Activated T-helper 1 cell treated with anti-CD3 and anti-CD28 coated beads, Interleukin-12 subunit alpha, Interleukin-12 subunit beta, Interleukin-2, Interleukin-4 antibody, amounts not matched to agents 30 ng/mL and 10 ng/mL and 1 ng/mL, durations not matched to agents 14 hours and 24 hours and 36 hours (primary cell): ENCODE measurements at regions of chr5 and their contacts with region 1.

Region 1: GRCh38 chr5:142151436-142152383 is 43.1 kb downstream of the NDFIP1 start:
- DNase-seq: peak; percentile 29
- H3K4me3 Mint-ChIP-seq: no peak overlapping the region
- H3K27ac Mint-ChIP-seq: no peak overlapping the region
- H3K4me1 Mint-ChIP-seq: peaks cover 14% of the 10 kb centered on the region
- H3K27me3 Mint-ChIP-seq: no peaks in the 10 kb centered on the region

Region 2: GRCh38 chr5:142296914-142297417 is 145.3 kb after region 1 on chr5:
- intact Hi-C with region 1: no loop called
- DNase-seq: no peak
- H3K4me3 Mint-ChIP-seq: no peak overlapping the region
- H3K27ac Mint-ChIP-seq: no peak overlapping the region
- H3K4me1 Mint-ChIP-seq: peaks cover 7% of the 10 kb centered on the region
- H3K27me3 Mint-ChIP-seq: peaks cover 4% of the 10 kb centered on the region

Region 3: GRCh38 chr5:142324871-142325724 is 173.4 kb after region 1 on chr5 and contains the start of gene SPRY4:
- intact Hi-C with region 1: loop called (anchors 10 kb)
- DNase-seq: peak; percentile 80
- H3K4me3 Mint-ChIP-seq: peak within 1 kb of the TSS; percentile 93
- H3K27ac Mint-ChIP-seq: peak within 1 kb of the TSS; percentile 81
- H3K4me1 Mint-ChIP-seq: peaks cover 42% of the 10 kb centered on the region
- H3K27me3 Mint-ChIP-seq: peaks cover 43% of the 10 kb centered on the region
- total RNA-seq, gene SPRY4: 1.7 and 2.4 TPM in 2 replicates

Region 4: DNA sequence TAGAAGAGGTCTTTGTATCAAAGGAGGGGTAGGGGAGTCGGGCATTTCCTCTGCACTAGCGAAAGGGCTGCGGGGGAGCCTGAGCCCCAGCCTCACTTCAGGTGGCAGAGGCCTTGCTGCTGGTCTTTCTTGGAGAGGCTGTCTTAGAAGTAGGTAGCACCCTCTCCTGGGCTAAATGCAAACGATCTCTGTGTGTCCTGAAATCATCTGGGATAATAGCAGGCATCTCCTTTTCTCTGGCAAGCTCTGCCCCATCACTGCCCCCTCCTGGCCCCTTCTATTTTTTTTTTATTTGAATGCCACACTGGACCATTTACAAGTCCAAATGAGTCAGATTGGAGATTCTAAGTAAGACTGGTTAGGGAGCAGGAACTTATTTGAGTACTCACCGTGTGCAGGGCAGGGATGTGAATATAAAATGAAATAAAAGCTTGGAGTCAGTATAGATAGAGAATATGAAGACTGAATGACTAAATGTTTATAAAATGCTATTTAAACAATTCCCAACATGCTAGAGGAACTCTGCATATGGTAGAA is 397.1 kb after region 1 on chr5:
- intact Hi-C with region 1: loop called (anchors 1 kb)
- DNase-seq: no peak
- H3K4me3 Mint-ChIP-seq: no peak overlapping the region
- H3K27ac Mint-ChIP-seq: no peak overlapping the region
- H3K4me1 Mint-ChIP-seq: peaks cover 6% of the 10 kb centered on the region
- H3K27me3 Mint-ChIP-seq: peaks cover 37% of the 10 kb centered on the region

Region 5: GRCh38 chr5:142587354-142587965 is 435.8 kb after region 1 on chr5:
- intact Hi-C with region 1: loop called (anchors 5 kb)
- DNase-seq: no peak
- H3K4me3 Mint-ChIP-seq: no peak overlapping the region
- H3K27ac Mint-ChIP-seq: no peak overlapping the region
- H3K4me1 Mint-ChIP-seq: no peaks in the 10 kb centered on the region
- H3K27me3 Mint-ChIP-seq: peaks cover 31% of the 10 kb centered on the region

Region 6: DNA sequence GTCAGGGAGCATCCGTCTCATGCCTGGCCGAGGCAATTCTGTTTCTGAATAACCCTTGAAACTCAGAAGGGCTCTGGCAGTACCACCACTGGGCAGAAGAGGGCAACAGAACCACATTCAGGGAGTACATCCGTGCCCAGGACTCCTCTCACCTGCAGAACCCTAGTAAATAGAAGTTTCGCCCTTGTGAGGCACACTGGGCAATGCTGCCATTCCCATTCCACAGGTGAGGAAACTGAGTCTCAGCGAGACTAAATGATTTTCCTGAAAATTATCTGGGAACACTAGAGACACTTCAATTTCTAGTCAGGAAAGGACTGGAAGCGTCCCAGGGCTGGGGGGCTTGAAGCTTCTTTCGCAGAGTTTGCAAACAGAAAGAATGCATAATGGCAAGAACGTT is 459.4 kb after region 1 on chr5:
- intact Hi-C with region 1: loop called (anchors 2 kb)
- DNase-seq: peak; percentile 44
- H3K4me3 Mint-ChIP-seq: no peak overlapping the region
- H3K27ac Mint-ChIP-seq: no peak overlapping the region
- H3K4me1 Mint-ChIP-seq: no peaks in the 10 kb centered on the region
- H3K27me3 Mint-ChIP-seq: peaks cover 19% of the 10 kb centered on the region

Region 7: GRCh38 chr5:142617416-142618129 is 465.9 kb after region 1 on chr5:
- intact Hi-C with region 1: loop called (anchors 2 kb)
- DNase-seq: no peak
- H3K4me3 Mint-ChIP-seq: no peak overlapping the region
- H3K27ac Mint-ChIP-seq: peak overlapping the region; percentile 8
- H3K4me1 Mint-ChIP-seq: peaks cover 14% of the 10 kb centered on the region
- H3K27me3 Mint-ChIP-seq: peaks cover 15% of the 10 kb centered on the region

Region 8: DNA sequence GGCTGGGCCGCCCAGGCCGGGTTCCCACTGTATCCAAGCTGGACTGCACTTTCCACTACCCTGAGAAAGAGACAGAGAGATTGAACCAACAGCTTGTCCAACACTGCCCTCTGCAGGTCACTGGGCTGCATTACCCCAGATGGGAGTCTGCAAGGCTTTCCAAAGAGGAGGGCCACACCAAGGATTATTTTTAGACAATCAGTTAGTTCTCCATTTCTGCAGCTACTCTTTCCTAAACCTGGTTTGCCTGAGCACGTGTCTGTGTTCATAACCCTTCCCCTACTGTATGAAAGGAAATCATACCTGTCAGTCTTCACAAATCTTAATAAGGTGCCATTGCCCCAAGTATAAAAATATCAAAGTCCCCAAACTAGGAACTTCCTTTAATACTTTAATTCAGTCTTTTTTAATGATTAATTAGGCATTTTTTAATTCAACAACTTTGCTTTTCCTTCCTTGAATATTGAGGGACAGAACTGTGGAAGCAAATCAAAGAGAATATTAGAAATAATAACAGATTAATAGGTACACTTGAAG is 547.5 kb after region 1 on chr5:
- intact Hi-C with region 1: loop called (anchors 1 kb)
- DNase-seq: peak; percentile 56
- H3K4me3 Mint-ChIP-seq: no peak overlapping the region
- H3K27ac Mint-ChIP-seq: no peak overlapping the region
- H3K4me1 Mint-ChIP-seq: no peaks in the 10 kb centered on the region
- H3K27me3 Mint-ChIP-seq: peaks cover 13% of the 10 kb centered on the region